GM12878 (cell line): ENCODE measurements at regions of chr7 and their contacts with region 1.

Region 1: DNA sequence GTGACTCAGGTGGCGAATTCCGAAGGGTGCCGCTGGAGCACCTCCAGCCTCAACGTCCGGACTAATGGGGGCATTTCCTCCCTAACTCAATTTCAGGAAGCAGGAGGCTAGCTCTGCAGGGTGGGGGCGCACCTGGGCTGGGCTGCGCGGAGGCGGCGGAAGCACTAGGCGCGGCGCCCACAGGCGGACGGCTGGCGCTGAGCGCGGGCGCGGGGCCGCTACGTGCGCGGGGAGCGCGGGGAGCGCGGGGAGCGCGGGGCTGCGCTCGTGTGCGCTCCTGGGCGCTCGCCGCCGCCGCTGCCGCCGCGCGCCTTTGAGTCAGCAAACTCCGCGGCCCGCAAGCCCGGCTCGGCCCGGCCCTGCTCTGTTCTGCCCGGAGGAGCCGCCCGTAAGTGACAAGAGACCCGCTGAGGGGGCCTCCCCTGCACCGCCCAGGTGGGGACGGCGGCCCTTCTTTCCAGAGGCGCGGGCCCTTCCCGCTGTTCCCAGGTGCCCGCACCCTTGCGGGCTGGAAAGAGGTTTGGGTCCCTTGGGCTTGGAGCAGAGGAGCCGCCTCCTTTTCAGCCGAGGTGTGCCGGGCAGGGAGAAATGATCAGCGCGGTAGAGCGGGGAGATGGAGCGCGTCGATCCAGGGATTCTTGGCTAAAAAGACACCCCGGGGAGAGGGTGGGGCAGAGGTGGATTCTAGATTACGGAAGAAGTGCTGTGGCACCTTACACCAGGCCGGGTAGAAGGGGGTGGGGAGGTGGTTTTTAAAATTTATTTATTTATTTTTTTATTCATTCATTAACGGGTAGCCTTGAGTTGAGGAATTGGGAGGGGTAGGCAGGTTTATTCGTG is at the start of gene SNX10:
- DNase-seq: no peak
- ATAC-seq: peak; percentile 80
- H3K4me3 ChIP-seq: peak within 1 kb of the TSS; percentile 98
- H3K27ac ChIP-seq: peak within 1 kb of the TSS; percentile 87
- H3K4me1 ChIP-seq: peaks cover 16% of the 10 kb centered on the region
- H3K27me3 ChIP-seq: no peaks in the 10 kb centered on the region
- CTCF ChIP-seq: peak; percentile 54 to 84 (median 54); a peak in 5 of 6 replicates
- EP300 ChIP-seq: no peak
- POLR2A ChIP-seq: peak; percentile 66; the same call in 1 of the 2 replicates
- RAD21 ChIP-seq: peak; percentile 67
- polyA plus RNA-seq, gene SNX10: 22.9 to 29.7 TPM

Region 2: GRCh38 chr7:26078437-26079336 is 213.2 kb before region 1 on chr7:
- CTCF ChIA-PET with region 1: interaction called, 3 read pairs
- POLR2A ChIA-PET with region 1: no interaction called
- RAD21 ChIA-PET with region 1: interaction called, 3 read pairs
- SMC1A ChIA-PET with region 1: interaction called, 3 read pairs
- in situ Hi-C with region 1: no loop called
- intact Hi-C with region 1: loop called (anchors 5 kb)
- DNase-seq: peak; percentile 36
- ATAC-seq: peak; percentile 98
- H3K4me3 ChIP-seq: no peak overlapping the region
- H3K27ac ChIP-seq: no peak overlapping the region
- H3K4me1 ChIP-seq: no peaks in the 10 kb centered on the region
- H3K27me3 ChIP-seq: peaks cover 2 to 5% of the 10 kb centered on the region in 2 experiments; a peak in 1 of 4 replicates
- CTCF ChIP-seq: peak; percentile 50 to 61 (median 53); a peak in 5 of 6 replicates
- EP300 ChIP-seq: no peak
- POLR2A ChIP-seq: no peak
- RAD21 ChIP-seq: peak; percentile 60

Region 3: DNA sequence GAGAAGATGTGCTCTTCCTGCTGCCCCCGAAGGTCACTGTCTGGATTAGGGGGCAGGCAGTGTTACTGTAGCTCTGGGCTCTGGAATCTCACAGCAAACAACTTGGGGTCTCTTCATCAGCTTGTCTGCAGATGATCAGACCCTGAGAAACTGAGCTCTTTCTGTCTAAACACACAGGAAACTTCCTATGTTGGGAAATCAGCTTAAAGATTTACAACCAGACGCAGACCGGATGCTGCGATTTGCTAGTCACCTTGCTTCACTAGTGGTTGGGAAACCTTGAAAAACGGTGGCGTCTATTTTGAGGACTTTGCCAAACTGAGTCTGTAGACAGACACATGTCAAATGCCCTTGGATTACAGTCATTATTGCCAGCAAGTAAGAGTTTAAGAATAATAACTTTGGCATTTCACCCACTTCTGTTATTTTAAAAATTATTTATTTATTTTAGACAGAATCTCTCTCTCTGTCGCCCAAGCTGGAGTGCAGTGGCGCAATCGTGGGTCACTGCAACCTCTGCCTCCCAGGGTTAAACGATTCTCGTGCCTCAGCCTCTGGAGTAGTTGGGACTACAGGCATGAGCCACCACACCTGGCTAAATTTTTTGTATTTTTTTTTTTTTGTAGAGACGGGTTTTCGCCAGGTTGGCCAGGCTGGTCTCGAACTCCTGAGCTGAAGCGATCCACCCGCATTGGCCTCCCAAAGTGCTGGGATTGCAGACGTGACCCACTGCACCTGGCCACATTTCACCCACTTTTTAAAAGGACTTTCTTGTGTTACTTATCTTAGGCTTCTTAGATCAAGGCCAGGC is 13.7 kb after region 1 on chr7:
- CTCF ChIA-PET with region 1: interaction called, 13 read pairs
- POLR2A ChIA-PET with region 1: interaction called, 5 read pairs
- RAD21 ChIA-PET with region 1: interaction called, 6 read pairs
- SMC1A ChIA-PET with region 1: interaction called, 32 read pairs
- in situ Hi-C with region 1: no loop called
- intact Hi-C with region 1: no loop called
- DNase-seq: no peak
- ATAC-seq: peak; percentile 72
- H3K4me3 ChIP-seq: no peak overlapping the region
- H3K27ac ChIP-seq: no peak overlapping the region
- H3K4me1 ChIP-seq: no peaks in the 10 kb centered on the region
- H3K27me3 ChIP-seq: no peaks in the 10 kb centered on the region
- CTCF ChIP-seq: no peak
- EP300 ChIP-seq: no peak
- POLR2A ChIP-seq: no peak
- RAD21 ChIP-seq: no peak

Region 4: DNA sequence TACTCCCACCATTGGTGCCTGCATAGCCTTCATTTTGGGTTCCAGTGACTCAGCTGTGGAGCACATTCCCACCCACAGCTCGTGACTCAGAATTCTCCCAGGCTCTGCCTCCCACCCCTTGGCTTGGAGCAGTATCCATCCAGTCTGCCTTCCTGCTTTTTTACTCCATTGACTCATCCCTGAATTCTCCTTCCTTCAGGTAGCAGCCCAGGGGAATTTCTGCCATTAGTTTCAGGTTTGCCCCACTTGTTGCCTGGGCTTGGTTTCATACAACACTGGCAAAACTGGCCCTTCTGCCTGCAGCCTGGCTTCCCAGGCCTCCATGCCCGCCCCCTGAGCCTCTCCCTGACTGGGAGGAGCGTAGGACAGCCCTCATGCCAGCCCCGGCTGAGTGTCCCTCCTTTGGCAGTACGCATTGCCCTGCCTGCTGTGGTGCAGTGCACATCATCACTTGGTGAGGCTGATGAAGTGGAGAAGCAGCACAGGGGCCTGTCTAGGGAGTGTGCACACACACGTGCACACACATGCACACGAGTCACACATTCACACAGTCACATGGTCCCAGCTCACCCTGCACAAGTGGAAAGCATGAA is 54.8 kb after region 1 on chr7:
- CTCF ChIA-PET with region 1: interaction called, 20 read pairs
- POLR2A ChIA-PET with region 1: interaction called, 19 read pairs
- RAD21 ChIA-PET with region 1: interaction called, 36 read pairs
- SMC1A ChIA-PET with region 1: interaction called, 26 read pairs
- in situ Hi-C with region 1: no loop called
- intact Hi-C with region 1: loop called (anchors 5 kb)
- DNase-seq: no peak
- ATAC-seq: peak; percentile 35
- H3K4me3 ChIP-seq: no peak overlapping the region
- H3K27ac ChIP-seq: no peak overlapping the region
- H3K4me1 ChIP-seq: peaks cover 14% of the 10 kb centered on the region
- H3K27me3 ChIP-seq: no peaks in the 10 kb centered on the region
- CTCF ChIP-seq: no peak
- EP300 ChIP-seq: no peak
- POLR2A ChIP-seq: no peak
- RAD21 ChIP-seq: no peak

Region 5: DNA sequence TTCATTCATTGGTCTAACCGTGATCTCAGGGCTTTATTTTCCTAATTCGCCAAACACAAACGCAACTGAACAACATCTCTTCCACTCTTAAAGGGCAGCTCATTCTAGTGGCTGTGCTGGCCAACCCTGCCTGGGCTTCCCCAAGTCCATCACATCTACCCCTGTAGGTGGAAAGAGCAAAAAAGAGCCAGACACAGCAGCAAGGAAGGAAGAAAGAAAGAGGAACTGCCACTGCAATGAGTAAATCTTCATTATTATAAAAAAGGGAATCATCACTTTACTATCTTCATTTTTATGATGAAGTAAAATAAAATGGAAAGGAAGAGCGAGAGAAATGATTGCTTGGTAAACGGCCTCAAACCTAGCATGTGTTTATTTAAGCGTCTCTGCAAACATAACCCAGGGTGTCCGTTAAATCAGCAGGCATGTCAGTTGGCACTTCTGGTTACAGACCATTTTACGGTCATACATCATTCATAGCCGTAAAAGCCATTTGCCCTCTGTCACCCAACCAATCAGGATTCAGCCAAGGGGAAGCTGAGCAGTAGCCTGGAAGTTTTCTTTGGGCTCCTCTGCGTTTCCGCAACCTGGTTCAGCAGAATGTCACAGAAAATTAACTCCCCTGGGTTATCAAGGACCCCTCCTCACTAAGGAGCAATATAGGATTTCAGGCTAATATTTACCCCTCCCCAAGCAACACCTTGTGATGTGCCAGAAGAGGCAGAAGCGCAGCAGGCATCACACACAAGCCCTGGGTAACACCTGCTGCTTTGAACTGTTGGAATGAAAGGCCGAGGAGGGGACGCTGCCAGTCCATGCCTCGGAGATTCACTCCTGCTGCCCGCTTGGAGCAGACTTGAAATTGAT is 233.7 kb after region 1 on chr7:
- CTCF ChIA-PET with region 1: no interaction called
- POLR2A ChIA-PET with region 1: no interaction called
- RAD21 ChIA-PET with region 1: no interaction called
- SMC1A ChIA-PET with region 1: no interaction called
- in situ Hi-C with region 1: no loop called
- intact Hi-C with region 1: no loop called
- DNase-seq: no peak
- ATAC-seq: peak; percentile 19; the same call in 1 of the 3 replicates
- H3K4me3 ChIP-seq: no peak overlapping the region
- H3K27ac ChIP-seq: no peak overlapping the region
- H3K4me1 ChIP-seq: no peaks in the 10 kb centered on the region
- H3K27me3 ChIP-seq: no peaks in the 10 kb centered on the region; a peak in 1 of 4 replicates
- CTCF ChIP-seq: no peak
- EP300 ChIP-seq: no peak
- POLR2A ChIP-seq: no peak
- RAD21 ChIP-seq: no peak